Body of pancreas (tissue), 4 donors: ENCODE measurements at regions of chr12 and their contacts with region 1.

Region 1: GRCh38 chr12:97404543-97404942 is 58.1 kb upstream of the RMST start:
- DNase-seq: peak; percentile 42 to 53 (median 47)
- ATAC-seq: peak; percentile 81
- H3K4me3 ChIP-seq: no peak overlapping the region
- H3K27ac ChIP-seq: no peak overlapping the region
- H3K4me1 ChIP-seq: no peaks in the 10 kb centered on the region
- H3K27me3 ChIP-seq: no peaks in the 10 kb centered on the region
- CTCF ChIP-seq: peak; percentile 22 to 80 (median 71)
- POLR2A ChIP-seq: no peak

Region 2: DNA sequence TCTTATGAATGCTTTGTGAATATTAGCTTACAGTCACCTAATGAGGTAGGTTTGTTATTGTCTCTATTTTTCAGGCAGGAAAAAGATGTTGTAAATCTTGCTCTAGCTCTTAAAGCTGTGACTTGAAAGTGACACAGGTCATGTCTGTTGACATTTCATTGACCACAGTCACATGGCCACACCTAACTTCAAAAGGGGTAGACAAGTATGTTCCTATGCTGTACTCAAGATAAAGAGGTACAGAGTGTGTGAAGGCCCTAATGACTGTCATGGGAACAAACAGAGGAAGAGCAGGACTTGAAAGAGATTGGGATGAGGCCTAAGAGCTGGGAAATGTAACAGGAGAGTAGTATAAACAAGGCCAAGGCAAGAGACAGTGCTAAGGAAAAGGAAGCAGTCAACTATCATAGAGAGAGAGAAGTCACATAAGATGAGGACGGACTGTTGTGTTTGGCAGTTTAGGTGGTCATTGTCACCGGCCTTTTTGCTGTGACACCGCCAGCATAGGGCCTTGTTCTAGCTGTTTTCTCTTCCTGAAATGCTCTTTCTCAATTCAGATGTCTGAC is 734.1 kb before region 1 on chr12:
- intact Hi-C with region 1: no loop called
- DNase-seq: no peak
- ATAC-seq: no peak
- H3K4me3 ChIP-seq: no peak overlapping the region
- H3K27ac ChIP-seq: no peak overlapping the region
- H3K4me1 ChIP-seq: no peaks in the 10 kb centered on the region
- H3K27me3 ChIP-seq: no peaks in the 10 kb centered on the region
- CTCF ChIP-seq: no peak
- POLR2A ChIP-seq: no peak

Region 3: DNA sequence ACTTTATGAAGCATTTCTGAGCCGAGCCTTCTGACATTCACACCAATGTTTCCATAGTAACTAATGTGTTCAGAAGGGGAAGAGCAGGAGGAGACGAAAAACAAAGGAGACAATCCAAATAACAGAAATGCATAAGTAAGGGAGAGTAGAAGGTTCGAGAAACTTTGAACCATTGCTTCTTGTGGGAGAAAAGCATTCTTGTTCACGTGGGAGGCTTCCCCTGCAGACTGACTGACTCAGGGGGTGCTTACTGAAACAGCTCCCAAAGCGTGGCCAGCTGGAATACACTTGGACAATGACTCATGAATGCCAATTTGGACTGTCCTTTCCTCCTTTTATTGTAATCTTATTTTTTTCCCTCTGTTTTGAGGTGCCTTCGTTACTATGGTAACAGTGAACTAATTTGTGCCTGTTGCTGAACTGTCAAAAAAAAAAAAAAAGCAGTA is 423.5 kb before region 1 on chr12:
- intact Hi-C with region 1: loop called (anchors 5 kb)
- DNase-seq: no peak
- ATAC-seq: no peak
- H3K4me3 ChIP-seq: no peak overlapping the region
- H3K27ac ChIP-seq: no peak overlapping the region
- H3K4me1 ChIP-seq: peaks cover 8% of the 10 kb centered on the region
- H3K27me3 ChIP-seq: no peaks in the 10 kb centered on the region
- CTCF ChIP-seq: no peak
- POLR2A ChIP-seq: no peak